ENCODE measurements at regions of chr3 and their contacts with region 1.

Region 1: DNA sequence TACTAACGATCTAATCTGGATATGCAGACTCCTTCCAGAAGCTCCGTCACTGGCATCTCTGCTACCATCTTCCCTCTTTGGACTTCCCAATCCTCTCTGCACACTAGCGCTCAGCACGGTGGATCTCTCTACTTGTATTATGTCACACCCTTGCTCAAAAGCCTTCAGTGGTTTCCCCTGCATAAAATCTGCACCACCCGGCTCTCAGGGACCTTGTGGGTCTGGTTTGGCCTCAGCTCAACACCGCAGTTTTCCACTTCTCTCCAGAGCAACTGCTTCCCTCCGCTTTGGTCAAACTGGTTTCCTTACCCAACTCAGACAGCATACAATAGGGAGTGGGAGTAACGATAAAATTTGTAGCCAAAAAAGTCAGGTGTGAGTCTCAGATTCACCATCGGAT is 30.7 kb upstream of the HES1 start:
- DNase-seq: no peak
- ATAC-seq: no peak
- H3K4me3 ChIP-seq: no peak overlapping the region
- H3K27ac ChIP-seq: no peak overlapping the region
- H3K4me1 ChIP-seq: no peaks in the 10 kb centered on the region
- H3K27me3 ChIP-seq: no peaks in the 10 kb centered on the region
- CTCF ChIP-seq: no peak
- POLR2A ChIP-seq: no peak

Region 2: GRCh38 chr3:194089357-194090177 is 15.7 kb before region 1 on chr3:
- in situ Hi-C with region 1: no loop called
- intact Hi-C with region 1: loop called (anchors 1 kb)
- DNase-seq: peak; percentile 59 to 75
- ATAC-seq: peak; percentile 85 to 89
- H3K4me3 ChIP-seq: no peak overlapping the region
- H3K27ac ChIP-seq: no peak overlapping the region
- H3K4me1 ChIP-seq: no peaks in the 10 kb centered on the region
- H3K27me3 ChIP-seq: no peaks in the 10 kb centered on the region
- CTCF ChIP-seq: no peak
- POLR2A ChIP-seq: no peak